Motor neuron (in vitro differentiated cells): ENCODE measurements at regions of chr5 and their contacts with region 1.

Region 1: DNA sequence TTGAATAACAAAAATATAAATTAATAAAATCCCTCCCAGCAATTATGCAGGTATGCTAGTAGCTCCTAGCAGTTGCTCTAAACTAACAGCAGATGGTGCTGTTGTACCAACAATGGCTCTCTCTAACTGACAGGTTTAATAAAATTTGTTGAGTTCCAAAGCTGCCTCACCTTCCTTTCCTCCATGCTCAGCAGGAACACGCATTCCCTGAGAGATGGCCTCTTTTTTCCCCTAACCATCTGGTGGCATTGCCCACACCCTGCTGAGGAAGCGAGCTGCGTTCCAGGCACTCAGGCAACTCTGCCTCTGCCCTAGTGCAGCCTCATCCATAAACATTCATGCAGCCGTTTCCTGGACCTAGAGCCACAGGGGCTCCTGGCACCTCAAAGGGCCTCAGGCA is 106.2 kb downstream of the KLHL3 start:
- ATAC-seq: peak; percentile 84 to 96 (median 90)
- H3K4me3 ChIP-seq: no peak overlapping the region
- H3K27ac ChIP-seq: no peak overlapping the region
- H3K4me1 ChIP-seq: no peaks in the 10 kb centered on the region

Region 2: DNA sequence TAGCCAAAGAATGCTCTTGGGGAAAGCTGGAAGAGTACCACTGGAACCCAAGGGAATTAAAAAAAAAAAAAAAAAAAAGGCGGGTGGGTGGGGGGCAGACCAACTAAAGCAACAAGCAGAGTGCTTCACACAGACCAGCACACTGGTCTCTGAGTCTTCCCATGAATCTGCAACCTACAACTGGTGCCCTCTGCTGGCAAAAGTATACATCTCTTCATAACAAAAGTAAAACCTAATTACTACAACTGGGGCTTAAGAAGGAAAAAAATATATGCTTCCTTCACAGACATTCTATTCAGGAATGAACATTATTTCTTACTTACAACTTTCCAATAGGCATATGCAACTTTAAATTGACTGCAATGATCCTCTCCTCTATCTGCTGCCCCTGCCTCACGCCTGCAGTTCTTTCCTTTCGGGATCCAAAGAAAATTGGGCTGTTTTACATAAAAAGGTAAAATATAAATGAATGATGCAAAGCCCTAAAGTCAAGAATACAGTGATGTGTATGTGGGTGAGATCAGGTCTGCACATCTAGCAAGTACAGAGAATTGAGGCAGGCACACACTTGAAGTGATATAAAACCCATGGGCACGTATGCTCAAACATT is 113.5 kb after region 1 on chr5:
- in situ Hi-C with region 1: loop called in 4 of 9 experiments (anchors 10 to 25 kb)
- ATAC-seq: peak; percentile 54 to 88 (median 78)
- H3K4me3 ChIP-seq: no peak overlapping the region
- H3K27ac ChIP-seq: no peak overlapping the region
- H3K4me1 ChIP-seq: no peaks in the 10 kb centered on the region